ENCODE measurements at regions of chr5 and their contacts with region 1.

Region 1: GRCh38 chr5:94524841-94525697 is 93.3 kb downstream of the KIAA0825 start:
- DNase-seq: no peak
- H3K4me3 ChIP-seq: no peak overlapping the region
- H3K27ac ChIP-seq: no peak overlapping the region
- H3K4me1 ChIP-seq: no peaks in the 10 kb centered on the region
- H3K27me3 ChIP-seq: no peaks in the 10 kb centered on the region
- CTCF ChIP-seq: peak; percentile 27 to 49 (median 28)
- EP300 ChIP-seq: no peak
- POLR2A ChIP-seq: no peak

Region 2: DNA sequence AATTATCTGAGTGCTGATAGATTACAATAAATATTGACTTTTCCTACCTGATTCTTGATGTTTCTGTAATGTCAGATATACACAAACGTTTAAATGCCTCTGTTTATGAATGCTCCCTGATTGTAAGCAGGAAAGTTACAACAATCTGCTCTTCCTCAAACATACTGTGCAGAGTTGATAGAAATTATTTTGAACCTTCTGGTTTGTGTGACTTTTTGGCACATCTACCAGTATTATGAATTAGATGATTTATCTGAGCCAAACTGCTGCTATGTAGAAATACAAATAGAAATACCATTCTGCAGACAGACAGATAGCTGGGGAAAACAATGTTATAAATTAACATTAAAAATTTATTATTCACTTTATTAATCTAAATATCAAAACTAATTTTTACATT is 206.4 kb after region 1 on chr5:
- intact Hi-C with region 1: loop called (anchors 10 kb)
- DNase-seq: no peak
- H3K4me3 ChIP-seq: no peak overlapping the region
- H3K27ac ChIP-seq: no peak overlapping the region
- H3K4me1 ChIP-seq: no peaks in the 10 kb centered on the region
- H3K27me3 ChIP-seq: no peaks in the 10 kb centered on the region
- CTCF ChIP-seq: no peak
- EP300 ChIP-seq: no peak
- POLR2A ChIP-seq: no peak

Region 3: GRCh38 chr5:95022967-95023695 is 498.1 kb after region 1 on chr5:
- intact Hi-C with region 1: no loop called
- DNase-seq: no peak
- H3K4me3 ChIP-seq: no peak overlapping the region
- H3K27ac ChIP-seq: no peak overlapping the region
- H3K4me1 ChIP-seq: peaks cover 0 to 11% (median 5%) of the 10 kb centered on the region in 4 donors
- H3K27me3 ChIP-seq: no peaks in the 10 kb centered on the region
- CTCF ChIP-seq: no peak
- EP300 ChIP-seq: no peak
- POLR2A ChIP-seq: no peak